ENCODE measurements at regions of chr18 and their contacts with region 1.

Region 1: GRCh38 chr18:22324191-22325131 is 93.3 kb downstream of the CTAGE1 start:
- DNase-seq: peak; percentile 85
- ATAC-seq: peak; percentile 84

Region 2: DNA sequence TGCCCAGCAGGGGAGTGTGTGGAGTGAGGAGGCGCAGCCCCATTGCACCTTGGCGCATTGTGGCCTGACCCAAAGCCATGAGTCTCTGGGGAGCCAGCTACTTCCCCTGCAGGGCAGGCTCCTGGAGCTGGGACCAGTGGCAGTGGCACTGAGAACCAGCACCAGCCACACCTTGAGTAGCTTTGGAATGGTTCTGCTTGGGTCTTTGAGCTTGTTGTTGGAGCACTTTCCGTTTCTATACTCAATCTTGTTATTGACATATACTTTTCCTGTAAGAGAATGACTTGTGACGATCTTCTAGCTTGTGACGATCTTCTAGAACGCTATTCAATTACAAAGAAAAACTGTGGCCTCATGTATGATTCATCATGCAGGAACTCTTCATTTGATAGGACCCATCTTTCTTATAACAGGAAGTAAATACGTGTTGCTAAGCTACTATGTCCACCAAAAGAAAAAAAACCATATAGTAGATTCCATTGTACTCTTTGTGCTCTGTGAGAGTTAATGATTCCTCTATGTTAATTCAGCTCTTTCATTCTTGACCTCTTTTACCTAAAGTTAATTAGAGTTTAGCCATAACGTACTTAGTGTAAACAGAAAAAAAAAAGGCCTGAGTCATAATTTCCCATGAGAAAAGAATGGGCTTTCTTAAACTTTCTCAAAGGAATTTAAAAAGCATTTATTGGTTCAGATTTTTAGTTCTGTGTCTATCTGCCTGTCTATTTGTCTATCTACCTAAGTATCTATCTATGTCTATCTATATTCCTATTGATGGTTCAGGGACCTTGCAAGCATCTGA is 41.9 kb before region 1 on chr18:
- intact Hi-C with region 1: loop called (anchors 5 kb)
- DNase-seq: no peak
- ATAC-seq: no peak

Region 3: GRCh38 chr18:22509423-22509822 is 185.0 kb after region 1 on chr18:
- intact Hi-C with region 1: no loop called
- DNase-seq: no peak
- ATAC-seq: no peak